Astrocyte of the cerebellum (primary cell): ENCODE measurements at regions of chr3 and their contacts with region 1.

Region 1: DNA sequence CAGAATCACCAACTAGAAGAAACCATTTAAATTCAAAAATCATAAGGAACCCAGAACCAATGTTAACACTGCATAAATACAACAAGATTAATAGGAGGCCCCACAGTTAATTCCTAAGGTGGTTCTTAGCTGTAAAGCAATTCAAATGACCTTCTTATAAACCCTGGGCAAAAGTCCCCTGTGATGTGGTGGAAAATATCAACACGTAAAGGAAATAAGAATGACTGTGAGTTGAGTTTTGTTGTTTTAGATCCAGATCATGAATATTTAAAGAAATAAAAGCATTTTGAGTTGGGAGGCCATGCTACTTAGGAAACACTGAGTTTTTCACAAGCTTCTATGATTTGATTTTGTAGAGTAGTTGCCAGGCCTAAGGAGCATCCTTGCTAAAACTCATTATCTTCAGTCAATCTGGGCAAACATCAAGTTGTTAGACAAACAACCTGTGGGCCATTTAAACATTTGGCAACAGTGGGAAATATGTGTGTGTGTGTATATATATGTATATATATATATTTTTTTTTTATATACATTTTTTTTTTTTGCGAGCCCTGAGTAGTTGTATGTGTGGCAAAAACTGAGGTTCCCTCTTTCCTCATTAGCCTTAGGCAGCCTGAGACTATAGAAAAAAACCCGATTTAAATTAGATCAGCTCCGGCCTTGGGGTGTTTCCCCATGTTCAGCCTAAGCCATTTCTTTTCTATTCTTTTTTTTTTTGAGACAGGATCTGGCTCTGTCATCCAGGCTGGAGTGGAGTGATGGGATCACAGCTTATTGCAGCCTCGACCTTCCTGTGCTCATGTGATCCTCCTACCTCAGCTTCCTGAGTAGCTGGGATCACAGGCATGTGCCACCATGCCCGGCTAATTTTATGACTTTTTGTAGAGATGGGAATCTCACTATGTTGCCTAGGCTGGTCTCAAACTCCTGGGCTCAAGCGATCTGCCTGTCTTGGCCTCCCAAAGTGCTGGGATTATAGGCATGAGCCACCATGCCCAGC is 8.0 kb upstream of the PXK start:
- DNase-seq: peak; percentile 42
- H3K4me3 ChIP-seq: no peak overlapping the region
- CTCF ChIP-seq: no peak

Region 2: DNA sequence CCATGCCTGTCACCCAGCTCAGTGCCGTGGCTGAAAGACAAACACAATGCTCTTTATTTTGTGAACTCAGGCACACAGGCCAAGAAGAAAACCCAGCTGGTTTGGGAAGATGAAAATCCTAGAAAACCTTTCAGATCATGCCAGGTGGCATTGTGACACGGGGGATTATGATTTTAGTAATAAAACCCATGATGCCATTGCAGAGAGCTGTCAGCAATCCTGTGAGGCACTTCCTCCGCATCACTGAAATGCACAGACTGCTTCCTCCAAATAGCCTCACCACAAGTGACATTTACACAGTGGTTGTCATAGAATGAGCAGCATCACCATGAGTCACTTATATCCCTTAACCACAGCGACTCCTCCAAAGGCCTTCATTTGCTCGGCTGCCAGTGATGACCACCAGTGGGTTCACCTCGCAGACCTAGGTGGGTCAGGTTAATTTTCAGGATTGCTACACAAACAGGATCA is 64.4 kb before region 1 on chr3:
- in situ Hi-C with region 1: no loop called
- DNase-seq: peak; percentile 34
- H3K4me3 ChIP-seq: no peak overlapping the region
- CTCF ChIP-seq: no peak

Region 3: DNA sequence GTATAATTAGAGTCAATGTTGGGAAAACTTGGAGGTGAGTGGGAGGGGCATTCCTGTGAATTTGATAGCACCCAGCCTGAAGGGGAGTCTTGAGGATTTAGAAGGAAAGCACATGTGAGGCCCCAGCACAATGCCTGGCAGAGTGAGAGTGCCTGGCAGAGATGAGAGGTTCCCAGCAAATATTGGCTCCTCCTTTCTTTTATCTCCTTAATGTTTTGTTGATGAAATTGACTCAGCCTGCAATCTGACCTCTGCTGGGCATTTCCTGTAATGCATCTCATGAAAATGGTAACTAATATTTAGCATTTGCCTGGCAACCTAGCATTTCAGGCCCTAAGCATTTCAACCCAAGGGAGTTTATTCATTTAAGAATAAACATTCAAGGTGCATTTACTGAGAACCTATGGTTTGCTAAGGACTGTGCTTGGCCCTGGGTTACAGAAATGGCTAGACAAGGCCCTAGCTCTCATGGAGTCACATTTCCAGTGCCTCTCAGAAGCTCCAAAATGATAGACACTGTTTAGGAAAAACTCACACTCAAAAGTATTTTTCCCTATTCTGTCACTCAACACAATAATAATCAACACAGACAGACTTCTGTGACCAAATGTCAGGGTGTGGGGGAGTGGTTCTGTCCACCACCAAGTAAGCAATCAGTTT is 90.0 kb after region 1 on chr3:
- in situ Hi-C with region 1: loop called (anchors 5 kb)
- DNase-seq: peak; percentile 57
- H3K4me3 ChIP-seq: no peak overlapping the region
- CTCF ChIP-seq: peak; percentile 69